Ovary (tissue), 10 donors: ENCODE measurements at regions of chr14 and their contacts with region 1.

Region 1: GRCh38 chr14:57568554-57568953 is 74.9 kb upstream of the CCDC198 start:
- DNase-seq: no peak
- H3K4me3 ChIP-seq: no peak overlapping the region
- H3K27ac ChIP-seq: no peak overlapping the region
- H3K4me1 ChIP-seq: no peaks in the 10 kb centered on the region
- H3K27me3 ChIP-seq: no peaks in the 10 kb centered on the region
- CTCF ChIP-seq: no peak
- EP300 ChIP-seq: no peak
- POLR2A ChIP-seq: no peak

Region 2: GRCh38 chr14:58265401-58265800 is 696.8 kb after region 1 on chr14:
- intact Hi-C with region 1: loop called in 1 of 4 experiments (anchors 5 kb)
- DNase-seq: no peak
- H3K4me3 ChIP-seq: no peak overlapping the region
- H3K27ac ChIP-seq: no peak overlapping the region
- H3K4me1 ChIP-seq: no peaks in the 10 kb centered on the region
- H3K27me3 ChIP-seq: no peaks in the 10 kb centered on the region
- CTCF ChIP-seq: no peak
- EP300 ChIP-seq: no peak
- POLR2A ChIP-seq: no peak